Posterior vena cava (tissue), 2 donors: ENCODE measurements at regions of chr10 and their contacts with region 1.

Region 1: GRCh38 chr10:77889277-77889903 is 37.2 kb downstream of the DLG5 start:
- DNase-seq: no peak

Region 2: GRCh38 chr10:77965294-77965693 is 75.9 kb after region 1 on chr10:
- intact Hi-C with region 1: loop called in 1 of 2 experiments (anchors 10 kb)
- DNase-seq: peak; percentile 43